ENCODE measurements at regions of chr11 and their contacts with region 1.

Region 1: DNA sequence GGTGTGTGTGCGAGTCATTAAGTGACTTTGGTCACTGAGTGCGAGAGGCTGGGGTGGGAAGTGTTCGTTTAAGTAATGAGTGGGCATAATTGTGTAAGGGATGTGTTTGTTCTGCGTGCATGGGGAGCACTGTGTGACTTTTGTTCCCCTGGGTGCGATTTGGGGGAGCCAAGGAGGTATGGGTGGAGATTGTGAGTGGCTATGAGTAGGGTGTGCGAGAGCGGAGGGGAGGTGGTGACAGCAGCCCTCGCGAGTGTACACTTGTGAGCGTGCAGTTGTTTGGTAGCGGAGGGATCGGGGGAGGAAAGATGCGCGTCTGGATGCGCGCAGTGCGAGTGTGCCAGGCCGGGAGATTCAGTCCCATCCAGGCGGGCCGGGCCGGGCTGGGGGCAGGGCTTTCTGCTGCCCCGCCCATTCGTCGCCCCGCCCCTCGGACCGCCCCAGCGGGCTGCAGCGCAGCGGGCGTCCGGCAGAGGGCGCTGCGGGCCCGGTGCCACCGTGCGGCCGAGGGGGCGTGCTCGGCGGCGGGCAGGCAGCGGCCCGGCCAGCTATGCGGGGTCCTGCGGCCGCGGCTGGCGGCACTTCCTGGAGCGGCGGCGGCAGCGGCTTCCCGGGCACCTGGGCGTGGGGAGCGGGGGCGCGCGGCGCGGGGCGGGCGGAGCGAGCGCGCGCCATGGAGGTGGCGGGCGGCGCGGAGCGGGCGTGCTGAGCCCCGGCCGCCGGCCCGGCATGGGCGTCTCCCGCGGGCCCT is at the start of gene DGKZ:
- DNase-seq: peak; percentile 93 to 96
- ATAC-seq: peak; percentile 80 to 94 (median 84)
- H3K4me3 ChIP-seq: peak within 1 kb of the TSS; percentile 93
- H3K4me3 Mint-ChIP-seq: peak within 1 kb of the TSS; percentile 93
- H3K27ac ChIP-seq: peak within 1 kb of the TSS; percentile 41
- H3K27ac Mint-ChIP-seq: peak within 1 kb of the TSS; percentile 90
- H3K4me1 ChIP-seq: peaks cover 73% of the 10 kb centered on the region
- H3K4me1 Mint-ChIP-seq: peaks cover 57 to 64% of the 10 kb centered on the region in 2 donors
- H3K27me3 ChIP-seq: no peaks in the 10 kb centered on the region
- H3K27me3 Mint-ChIP-seq: no peaks in the 10 kb centered on the region
- CTCF ChIP-seq: peak; percentile 69
- total RNA-seq, gene DGKZ: 307 to 377 (median 350) TPM

Region 2: GRCh38 chr11:46121724-46122477 is 225.2 kb before region 1 on chr11:
- intact Hi-C with region 1: loop called (anchors 10 kb)
- DNase-seq: peak; percentile 67 to 91
- ATAC-seq: peak; percentile 43 to 72 (median 60)
- H3K4me3 ChIP-seq: peak overlapping the region; percentile 47
- H3K4me3 Mint-ChIP-seq: peak overlapping the region; percentile 93
- H3K27ac ChIP-seq: peak overlapping the region; percentile 64
- H3K27ac Mint-ChIP-seq: peak overlapping the region; percentile 97 to 99
- H3K4me1 ChIP-seq: peaks cover 11% of the 10 kb centered on the region
- H3K4me1 Mint-ChIP-seq: peaks cover 32 to 35% of the 10 kb centered on the region in 2 donors
- H3K27me3 ChIP-seq: no peaks in the 10 kb centered on the region
- H3K27me3 Mint-ChIP-seq: no peaks in the 10 kb centered on the region
- CTCF ChIP-seq: no peak

Region 3: GRCh38 chr11:46367244-46367915 is 20.3 kb after region 1 on chr11:
- intact Hi-C with region 1: loop called (anchors 1 kb)
- DNase-seq: peak; percentile 76 to 88
- ATAC-seq: peak; percentile 80 to 87 (median 83)
- H3K4me3 ChIP-seq: no peak overlapping the region
- H3K4me3 Mint-ChIP-seq: peak overlapping the region; percentile 6
- H3K27ac ChIP-seq: no peak overlapping the region
- H3K27ac Mint-ChIP-seq: peak overlapping the region; percentile 23 to 57
- H3K4me1 ChIP-seq: peaks cover 57% of the 10 kb centered on the region
- H3K4me1 Mint-ChIP-seq: peaks cover 33 to 61% of the 10 kb centered on the region in 2 donors
- H3K27me3 ChIP-seq: no peaks in the 10 kb centered on the region
- H3K27me3 Mint-ChIP-seq: no peaks in the 10 kb centered on the region
- CTCF ChIP-seq: peak; percentile 98

Region 4: DNA sequence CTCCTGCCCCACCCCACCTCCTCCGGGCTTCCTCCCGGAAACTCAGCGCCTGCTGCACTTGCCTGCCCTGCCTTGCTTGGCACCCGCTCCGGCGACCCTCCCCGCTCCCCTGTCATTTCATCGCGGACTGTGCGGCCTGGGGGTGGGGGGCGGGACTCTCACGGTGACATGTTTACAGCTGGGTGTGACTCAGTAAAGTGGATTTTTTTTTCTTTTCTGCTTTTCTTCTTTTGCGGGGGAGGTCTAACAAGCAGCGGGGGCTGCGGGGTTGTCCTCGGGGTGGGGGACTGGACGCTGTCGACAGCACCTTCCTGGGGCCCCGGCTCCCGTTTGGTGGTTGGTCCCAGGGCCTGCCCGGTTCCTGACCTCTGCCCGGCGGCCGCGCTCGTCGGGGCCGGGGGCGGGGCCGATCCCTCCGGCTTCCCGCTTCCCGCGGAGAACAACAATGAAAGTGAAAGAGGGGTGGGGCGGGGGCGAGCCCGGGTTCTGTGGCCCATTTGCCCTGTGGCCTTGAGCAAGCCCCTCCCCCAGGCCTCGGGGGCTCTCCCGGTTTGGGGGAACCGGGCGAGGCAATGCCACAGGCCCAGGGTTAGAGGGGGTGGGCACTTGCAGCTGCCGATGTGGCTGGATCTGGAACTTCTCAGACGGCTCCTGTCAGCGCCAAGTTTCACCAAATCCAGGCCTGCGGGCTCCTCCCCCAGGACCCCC is 33.4 kb after region 1 on chr11:
- intact Hi-C with region 1: loop called (anchors 5 kb)
- DNase-seq: peak in 1 of 2 donors; percentile 66
- ATAC-seq: peak; percentile 43 to 56 (median 54)
- H3K4me3 ChIP-seq: peak overlapping the region; percentile 66
- H3K4me3 Mint-ChIP-seq: peak overlapping the region; percentile 85
- H3K27ac ChIP-seq: peak overlapping the region; percentile 38
- H3K27ac Mint-ChIP-seq: peak overlapping the region in 1 of 2 donors; percentile 85
- H3K4me1 ChIP-seq: peaks cover 45% of the 10 kb centered on the region
- H3K4me1 Mint-ChIP-seq: peaks cover 13 to 38% of the 10 kb centered on the region in 2 donors
- H3K27me3 ChIP-seq: peaks cover 12% of the 10 kb centered on the region
- H3K27me3 Mint-ChIP-seq: peaks cover 0 to 10% of the 10 kb centered on the region in 2 donors
- CTCF ChIP-seq: no peak

Region 5: DNA sequence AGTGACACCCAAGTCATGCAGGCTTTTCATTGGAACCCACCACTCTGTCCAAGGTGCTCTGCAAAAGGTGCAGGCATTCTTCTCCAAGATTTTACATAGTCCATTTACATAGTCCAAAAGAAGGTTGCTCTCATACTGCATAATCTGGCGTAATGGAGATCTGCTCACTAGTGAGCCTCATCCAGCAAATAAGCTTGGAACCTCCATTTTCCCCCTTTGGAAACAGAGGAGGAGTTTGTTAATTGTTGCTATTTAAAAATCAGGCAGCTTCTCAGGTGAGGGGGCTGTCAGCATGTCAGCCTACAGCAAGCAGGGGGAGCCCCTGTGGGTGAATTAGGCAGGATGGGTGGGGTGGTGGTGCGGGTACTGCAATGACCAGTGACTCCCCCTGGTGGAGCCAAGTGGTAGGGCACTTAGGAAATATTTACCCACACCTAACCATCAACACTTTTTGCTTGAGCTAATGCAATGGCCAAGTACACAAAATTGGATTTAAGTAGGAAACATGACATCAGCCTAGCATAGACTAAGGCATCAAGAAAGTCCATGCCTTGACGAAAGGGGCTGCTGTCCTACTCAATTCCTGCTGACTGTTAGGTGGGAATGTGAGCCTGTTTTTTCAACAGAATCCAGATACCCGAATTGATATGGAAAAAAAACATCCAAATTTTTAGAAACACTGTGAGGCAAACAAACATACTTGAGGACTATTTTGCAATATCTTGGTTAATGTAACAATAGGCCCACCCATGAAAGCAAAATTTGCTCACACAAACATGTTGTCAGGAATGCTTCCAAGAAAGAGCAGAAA is 182.2 kb after region 1 on chr11:
- intact Hi-C with region 1: loop called (anchors 5 kb)
- DNase-seq: peak; percentile 64 to 87
- ATAC-seq: peak; percentile 93 to 100 (median 99)
- H3K4me3 ChIP-seq: no peak overlapping the region
- H3K4me3 Mint-ChIP-seq: no peak overlapping the region
- H3K27ac ChIP-seq: no peak overlapping the region
- H3K27ac Mint-ChIP-seq: peak overlapping the region; percentile 11 to 38
- H3K4me1 ChIP-seq: no peaks in the 10 kb centered on the region
- H3K4me1 Mint-ChIP-seq: peaks cover 34 to 42% of the 10 kb centered on the region in 2 donors
- H3K27me3 ChIP-seq: no peaks in the 10 kb centered on the region
- H3K27me3 Mint-ChIP-seq: no peaks in the 10 kb centered on the region
- CTCF ChIP-seq: peak; percentile 93

Region 6: GRCh38 chr11:46616998-46617675 is 270.1 kb after region 1 on chr11 and contains the starts of genes ATG13 and HARBI1:
- intact Hi-C with region 1: loop called (anchors 5 kb)
- DNase-seq: peak; percentile 91 to 96
- ATAC-seq: peak; percentile 90 to 98 (median 94)
- H3K4me3 ChIP-seq: peak within 1 kb of the TSS; percentile 95
- H3K4me3 Mint-ChIP-seq: peak within 1 kb of the TSS; percentile 99
- H3K27ac ChIP-seq: peak within 1 kb of the TSS; percentile 99
- H3K27ac Mint-ChIP-seq: peak within 1 kb of the TSS; percentile 99 to 100
- H3K4me1 ChIP-seq: peaks cover 20% of the 10 kb centered on the region
- H3K4me1 Mint-ChIP-seq: peaks cover 33 to 42% of the 10 kb centered on the region in 2 donors
- H3K27me3 ChIP-seq: no peaks in the 10 kb centered on the region
- H3K27me3 Mint-ChIP-seq: no peaks in the 10 kb centered on the region
- CTCF ChIP-seq: no peak
- total RNA-seq, gene ATG13: 125 to 137 (median 132) TPM
- total RNA-seq, gene HARBI1: 9.9 to 16.8 (median 12.7) TPM

Region 7: GRCh38 chr11:46700241-46701077 is 353.4 kb after region 1 on chr11 and contains the starts of genes ARHGAP1 and ZNF408:
- intact Hi-C with region 1: loop called (anchors 2 kb)
- DNase-seq: peak; percentile 97 to 100
- ATAC-seq: peak; percentile 97 to 99 (median 98)
- H3K4me3 ChIP-seq: peak within 1 kb of the TSS; percentile 85
- H3K4me3 Mint-ChIP-seq: peak within 1 kb of the TSS; percentile 97
- H3K27ac ChIP-seq: peak within 1 kb of the TSS; percentile 53
- H3K27ac Mint-ChIP-seq: peak within 1 kb of the TSS; percentile 84 to 94
- H3K4me1 ChIP-seq: peaks cover 44% of the 10 kb centered on the region
- H3K4me1 Mint-ChIP-seq: peaks cover 32 to 56% of the 10 kb centered on the region in 2 donors
- H3K27me3 ChIP-seq: no peaks in the 10 kb centered on the region
- H3K27me3 Mint-ChIP-seq: no peaks in the 10 kb centered on the region
- CTCF ChIP-seq: no peak
- total RNA-seq, gene ARHGAP1: 89.8 to 111 (median 102) TPM
- total RNA-seq, gene ZNF408: 9.1 to 19.0 (median 9.6) TPM